Activated CD8-positive, alpha-beta T cell treated with anti-CD3 and anti-CD28 coated beads, Interleukin-2, amount 10 ng/mL, durations not matched to agents 7 days and 5 days (primary cell): ENCODE measurements at regions of chr14 and their contacts with region 1.

Region 1: DNA sequence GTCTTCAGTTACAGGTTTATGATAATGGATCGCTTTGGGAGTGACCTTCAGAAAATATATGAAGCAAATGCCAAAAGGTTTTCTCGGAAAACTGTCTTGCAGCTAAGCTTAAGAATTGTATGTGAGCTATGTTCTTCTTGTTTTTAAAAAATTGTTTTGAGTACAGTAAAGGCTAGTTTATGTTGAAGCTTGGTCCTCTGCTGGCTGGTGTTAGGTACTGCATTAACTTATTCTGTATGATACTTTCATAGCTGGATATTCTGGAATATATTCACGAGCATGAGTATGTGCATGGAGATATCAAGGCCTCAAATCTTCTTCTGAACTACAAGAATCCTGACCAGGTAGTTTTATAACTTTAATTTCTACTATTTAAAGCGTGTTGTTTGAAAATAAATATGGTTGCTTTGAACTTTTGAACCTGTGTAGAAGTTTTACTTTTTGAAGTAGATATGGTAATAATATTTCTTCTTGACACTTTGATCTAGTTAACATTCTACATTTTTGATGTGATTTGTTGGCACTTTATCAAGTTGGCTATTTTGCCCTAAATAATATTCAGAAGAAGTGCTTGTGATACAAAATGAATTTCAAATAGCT is 55.7 kb downstream of the VRK1 start:
- DNase-seq: peak; percentile 26
- ATAC-seq: peak; percentile 51
- H3K4me3 Mint-ChIP-seq: no peak overlapping the region
- H3K27ac Mint-ChIP-seq: no peak overlapping the region
- H3K4me1 Mint-ChIP-seq: peaks cover 11% of the 10 kb centered on the region
- H3K27me3 Mint-ChIP-seq: no peaks in the 10 kb centered on the region

Region 2: DNA sequence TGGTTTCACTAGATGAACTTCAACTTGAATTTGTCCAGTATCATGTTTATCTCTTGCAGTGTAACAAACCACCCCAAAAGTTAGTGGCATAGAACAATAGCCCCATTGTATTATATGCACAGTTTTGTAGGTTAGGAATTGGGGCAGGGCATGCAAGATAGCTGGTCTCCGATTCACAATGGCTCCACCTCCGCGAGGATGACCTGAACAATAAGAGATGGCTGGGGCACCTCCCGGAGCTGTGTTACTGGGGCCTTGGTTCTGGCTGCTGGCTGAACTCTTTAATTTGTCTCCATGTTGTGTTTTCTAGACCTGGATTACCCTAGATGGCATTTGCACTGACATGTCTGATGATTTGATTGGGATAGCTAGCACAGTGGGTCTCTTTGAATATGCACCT is 76.1 kb before region 1 on chr14:
- CTCF ChIA-PET with region 1: no interaction called
- POLR2A ChIA-PET with region 1: no interaction called
- DNase-seq: no peak
- ATAC-seq: no peak
- H3K4me3 Mint-ChIP-seq: no peak overlapping the region
- H3K27ac Mint-ChIP-seq: no peak overlapping the region
- H3K4me1 Mint-ChIP-seq: no peaks in the 10 kb centered on the region
- H3K27me3 Mint-ChIP-seq: peaks cover 4% of the 10 kb centered on the region

Region 3: GRCh38 chr14:96796851-96797581 is 55.9 kb before region 1 on chr14 and contains the start of gene VRK1:
- CTCF ChIA-PET with region 1: interaction called, 14 read pairs
- POLR2A ChIA-PET with region 1: interaction called, 11 read pairs
- DNase-seq: peak; percentile 94
- ATAC-seq: peak; percentile 96
- H3K4me3 Mint-ChIP-seq: peak within 1 kb of the TSS; percentile 90
- H3K27ac Mint-ChIP-seq: peak within 1 kb of the TSS; percentile 94
- H3K4me1 Mint-ChIP-seq: peaks cover 22% of the 10 kb centered on the region
- H3K27me3 Mint-ChIP-seq: no peaks in the 10 kb centered on the region
- total RNA-seq, gene VRK1: 71.1 to 76.5 TPM

Region 4: GRCh38 chr14:96811985-96812667 is 40.8 kb before region 1 on chr14:
- CTCF ChIA-PET with region 1: interaction called, 10 read pairs
- POLR2A ChIA-PET with region 1: no interaction called
- DNase-seq: no peak
- ATAC-seq: peak; percentile 49
- H3K4me3 Mint-ChIP-seq: no peak overlapping the region
- H3K27ac Mint-ChIP-seq: no peak overlapping the region
- H3K4me1 Mint-ChIP-seq: peaks cover 45% of the 10 kb centered on the region
- H3K27me3 Mint-ChIP-seq: no peaks in the 10 kb centered on the region

Region 5: GRCh38 chr14:96863327-96863985 is 10.5 kb after region 1 on chr14:
- CTCF ChIA-PET with region 1: interaction called, 30 read pairs
- POLR2A ChIA-PET with region 1: no interaction called
- DNase-seq: no peak
- ATAC-seq: no peak
- H3K4me3 Mint-ChIP-seq: no peak overlapping the region
- H3K27ac Mint-ChIP-seq: no peak overlapping the region
- H3K4me1 Mint-ChIP-seq: no peaks in the 10 kb centered on the region
- H3K27me3 Mint-ChIP-seq: no peaks in the 10 kb centered on the region